ENCODE measurements at regions of chr17 and their contacts with region 1.

Region 1: GRCh38 chr17:41648411-41649195 is 24.2 kb upstream of the KRT17 start:
- DNase-seq: peak; percentile 91
- H3K4me3 ChIP-seq: peak overlapping the region; percentile 29
- H3K27ac ChIP-seq: peak overlapping the region; percentile 76
- H3K4me1 ChIP-seq: peaks cover 26% of the 10 kb centered on the region
- H3K27me3 ChIP-seq: no peaks in the 10 kb centered on the region
- CTCF ChIP-seq: peak; percentile 91

Region 2: DNA sequence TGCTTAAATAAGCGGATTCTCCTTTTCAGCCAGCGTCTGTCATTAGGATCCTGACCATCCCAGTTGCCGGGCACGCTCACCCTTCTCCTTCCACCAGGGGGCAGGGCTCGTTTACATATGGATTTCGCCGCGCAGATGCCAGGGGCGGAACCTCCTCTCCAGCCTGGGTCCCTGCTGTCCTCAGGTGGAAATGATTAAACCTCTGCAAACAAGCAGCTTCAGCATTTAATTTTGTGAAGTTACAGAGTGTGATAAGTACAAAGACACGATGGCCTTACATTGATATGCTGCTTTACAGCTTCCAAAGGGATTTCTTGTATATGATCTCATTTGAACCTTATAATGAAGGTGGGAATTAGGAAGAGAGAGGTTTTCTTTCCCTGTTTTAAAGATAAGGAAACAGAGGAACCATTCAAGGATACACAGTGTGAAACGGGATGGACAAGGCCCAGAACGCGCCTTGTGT is 845.0 kb before region 1 on chr17:
- intact Hi-C with region 1: loop called (anchors 5 kb)
- DNase-seq: peak; percentile 84
- H3K4me3 ChIP-seq: no peak overlapping the region
- H3K27ac ChIP-seq: no peak overlapping the region
- H3K4me1 ChIP-seq: no peaks in the 10 kb centered on the region
- H3K27me3 ChIP-seq: peaks cover 8% of the 10 kb centered on the region
- CTCF ChIP-seq: peak; percentile 74

Region 3: DNA sequence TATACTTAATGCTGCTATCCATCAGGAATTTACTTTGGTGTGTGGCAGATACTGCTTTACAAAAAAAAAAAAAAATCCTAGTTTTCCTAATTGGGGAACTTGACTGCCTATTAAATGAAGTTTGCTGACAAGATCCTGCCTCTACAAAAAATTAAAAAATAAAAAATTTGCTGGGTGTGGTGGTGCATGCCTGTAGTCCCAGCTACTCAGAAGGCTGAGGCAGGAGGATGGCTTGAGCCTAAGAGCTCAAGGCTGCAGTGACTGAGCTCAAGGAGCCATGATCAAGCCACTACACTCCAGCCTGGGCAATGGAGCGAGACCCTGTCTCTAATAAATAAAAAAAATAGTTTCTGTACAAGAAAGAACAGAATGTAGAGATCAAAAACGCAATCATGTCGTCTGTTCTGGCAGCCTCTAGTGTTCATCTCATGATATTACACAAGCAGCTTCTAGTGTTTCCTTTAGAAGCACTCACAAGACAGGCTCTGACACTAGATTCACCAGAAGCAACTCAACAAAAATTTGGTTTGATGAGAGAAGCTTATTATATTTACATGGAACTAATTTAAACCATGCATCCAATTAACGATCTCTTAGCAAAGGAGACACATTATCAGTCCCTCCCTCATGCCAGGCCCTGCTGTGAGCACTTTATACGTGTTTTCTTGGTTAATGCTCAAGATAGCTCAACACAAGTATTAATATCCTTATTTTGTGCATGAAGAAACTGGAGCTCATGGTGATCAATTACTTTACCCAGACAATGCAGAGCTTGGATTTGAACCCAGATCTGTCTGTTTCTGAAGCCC is 326.3 kb before region 1 on chr17:
- intact Hi-C with region 1: loop called (anchors 10 kb)
- DNase-seq: no peak
- H3K4me3 ChIP-seq: no peak overlapping the region
- H3K27ac ChIP-seq: no peak overlapping the region
- H3K4me1 ChIP-seq: no peaks in the 10 kb centered on the region
- H3K27me3 ChIP-seq: no peaks in the 10 kb centered on the region
- CTCF ChIP-seq: peak; percentile 79

Region 4: GRCh38 chr17:41548844-41549595 is 99.6 kb before region 1 on chr17:
- intact Hi-C with region 1: loop called (anchors 5 kb)
- DNase-seq: peak; percentile 93
- H3K4me3 ChIP-seq: no peak overlapping the region
- H3K27ac ChIP-seq: peak overlapping the region; percentile 87
- H3K4me1 ChIP-seq: peaks cover 23% of the 10 kb centered on the region
- H3K27me3 ChIP-seq: no peaks in the 10 kb centered on the region
- CTCF ChIP-seq: peak; percentile 93

Region 5: DNA sequence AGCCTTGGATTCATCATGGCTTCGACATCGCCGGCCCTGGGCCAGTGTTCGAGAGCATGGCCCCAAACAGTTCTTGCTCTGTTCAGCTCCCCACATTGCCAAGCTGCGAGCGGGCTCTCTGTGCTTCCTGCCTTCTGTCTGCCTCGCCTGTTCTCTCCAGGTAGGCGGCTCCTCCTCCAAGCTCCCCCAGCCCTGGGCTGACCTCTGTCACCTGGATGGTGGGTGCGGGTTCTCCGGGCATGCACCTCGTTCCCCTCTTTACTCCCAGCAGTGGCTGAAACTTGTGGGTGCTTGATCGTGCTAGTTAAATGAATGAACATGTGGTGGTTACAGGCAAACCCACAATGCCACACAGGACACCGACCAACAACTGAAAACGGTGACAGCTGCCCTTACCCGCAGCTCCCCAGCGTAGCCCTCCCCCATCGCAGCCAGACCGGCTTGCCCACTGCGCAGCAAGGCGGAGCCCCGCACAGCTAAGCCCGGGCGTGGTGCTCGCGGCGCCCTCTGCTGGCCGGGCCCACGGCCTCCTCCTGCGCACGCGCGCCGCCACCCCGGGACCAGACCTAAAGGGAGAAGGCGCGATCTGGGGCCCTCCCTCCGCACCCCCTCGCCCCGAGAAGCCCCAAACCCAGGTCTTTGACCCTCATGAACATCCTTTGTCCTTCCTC is 17.1 kb after region 1 on chr17:
- intact Hi-C with region 1: loop called (anchors 1 kb)
- DNase-seq: peak; percentile 92
- H3K4me3 ChIP-seq: peak overlapping the region; percentile 41
- H3K27ac ChIP-seq: peak overlapping the region; percentile 84
- H3K4me1 ChIP-seq: no peaks in the 10 kb centered on the region
- H3K27me3 ChIP-seq: no peaks in the 10 kb centered on the region
- CTCF ChIP-seq: peak; percentile 97

Measured in colonic mucosa (tissue), 4 donors.